ENCODE measurements at regions of chr1 and their contacts with region 1.

Region 1: DNA sequence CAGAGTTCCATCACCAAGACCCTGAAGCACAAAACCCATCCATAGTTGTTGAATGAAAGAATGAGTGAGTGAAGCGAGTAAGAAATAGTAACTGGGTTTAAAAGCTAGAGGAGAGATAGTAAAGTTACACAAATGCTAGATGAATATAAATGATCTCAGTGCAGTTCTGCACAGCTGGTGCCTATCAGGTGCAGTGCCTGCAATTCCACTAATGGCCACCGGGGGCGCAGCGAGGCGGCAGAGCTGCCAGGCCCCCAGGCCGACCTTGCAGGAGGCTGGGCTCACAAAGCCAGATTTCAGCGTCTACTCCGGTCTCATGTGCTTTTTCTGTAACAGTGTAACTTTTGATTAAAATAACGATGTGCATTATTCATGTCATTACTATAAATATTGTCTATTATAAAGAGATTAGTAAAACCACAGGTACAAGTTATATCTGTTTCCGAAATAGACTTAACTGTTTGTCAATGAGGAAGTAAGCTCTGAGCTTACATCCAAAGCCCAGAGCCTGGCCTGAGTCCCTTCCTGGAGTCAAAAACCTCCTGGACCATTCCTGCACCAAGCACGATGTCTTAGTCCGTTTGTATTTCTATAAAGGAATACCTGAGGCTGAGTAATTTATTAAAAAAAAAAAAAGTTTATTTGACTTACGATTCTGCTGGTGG is 477.6 kb downstream of the NPHP4 start:
- DNase-seq: peak; percentile 78
- H3K4me3 ChIP-seq: no peak overlapping the region
- H3K27ac ChIP-seq: no peak overlapping the region
- H3K4me1 ChIP-seq: no peaks in the 10 kb centered on the region
- H3K27me3 ChIP-seq: no peaks in the 10 kb centered on the region
- CTCF ChIP-seq: peak; percentile 100

Region 2: GRCh38 chr1:5707566-5708340 is 193.1 kb after region 1 on chr1:
- intact Hi-C with region 1: no loop called
- DNase-seq: no peak
- H3K4me3 ChIP-seq: no peak overlapping the region
- H3K27ac ChIP-seq: no peak overlapping the region
- H3K4me1 ChIP-seq: no peaks in the 10 kb centered on the region
- H3K27me3 ChIP-seq: no peaks in the 10 kb centered on the region
- CTCF ChIP-seq: no peak

Region 3: DNA sequence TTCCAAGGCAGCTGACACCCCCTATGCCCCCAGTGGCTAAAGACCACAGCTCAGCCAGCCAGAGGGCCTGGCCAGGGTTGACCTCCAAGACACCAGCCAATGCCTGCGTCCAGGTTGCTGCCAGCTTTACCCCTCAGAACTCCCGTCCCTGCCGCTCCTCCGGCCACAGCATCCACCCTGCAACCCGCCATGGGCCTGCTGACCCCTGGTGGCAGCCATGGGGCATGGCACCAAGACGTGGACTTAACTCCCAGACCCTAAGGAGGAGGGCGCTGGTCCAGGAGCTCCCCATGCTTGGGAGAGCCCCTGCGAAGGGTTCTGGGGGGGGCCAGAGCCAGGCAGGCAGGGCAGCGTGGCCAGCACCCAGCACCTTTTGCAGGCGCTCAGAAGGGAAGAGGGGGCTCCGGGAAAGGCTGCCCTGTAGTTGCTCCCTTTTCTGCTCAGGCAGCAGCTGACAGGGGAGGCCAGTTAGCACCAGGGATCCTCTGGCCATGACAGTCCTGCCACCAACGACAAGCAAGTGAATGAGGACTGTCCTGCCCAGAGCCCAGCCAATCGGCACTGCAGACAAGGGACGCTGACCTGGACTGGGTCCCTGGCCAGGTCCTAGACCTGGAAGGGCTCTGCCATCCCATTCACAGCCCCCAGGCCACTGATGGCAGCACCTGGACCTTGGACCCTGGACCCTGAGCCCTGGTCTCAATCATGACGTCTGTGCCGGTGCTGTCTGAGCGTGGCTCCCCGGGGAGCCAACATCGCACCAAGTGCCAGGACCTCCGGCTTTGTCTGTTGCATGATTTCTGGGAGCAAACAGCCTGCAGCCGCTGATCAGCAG is 231.3 kb after region 1 on chr1:
- intact Hi-C with region 1: loop called (anchors 5 kb)
- DNase-seq: peak; percentile 47
- H3K4me3 ChIP-seq: no peak overlapping the region
- H3K27ac ChIP-seq: no peak overlapping the region
- H3K4me1 ChIP-seq: no peaks in the 10 kb centered on the region
- H3K27me3 ChIP-seq: no peaks in the 10 kb centered on the region
- CTCF ChIP-seq: peak; percentile 94

Region 4: GRCh38 chr1:5915587-5916571 is 401.2 kb after region 1 on chr1:
- intact Hi-C with region 1: loop called (anchors 10 kb)
- DNase-seq: no peak
- H3K4me3 ChIP-seq: no peak overlapping the region
- H3K27ac ChIP-seq: no peak overlapping the region
- H3K4me1 ChIP-seq: no peaks in the 10 kb centered on the region
- H3K27me3 ChIP-seq: no peaks in the 10 kb centered on the region
- CTCF ChIP-seq: peak; percentile 64

Region 5: GRCh38 chr1:5973771-5974170 is 459.1 kb after region 1 on chr1:
- intact Hi-C with region 1: loop called (anchors 5 kb)
- DNase-seq: no peak
- H3K4me3 ChIP-seq: no peak overlapping the region
- H3K27ac ChIP-seq: no peak overlapping the region
- H3K4me1 ChIP-seq: no peaks in the 10 kb centered on the region
- H3K27me3 ChIP-seq: no peaks in the 10 kb centered on the region
- CTCF ChIP-seq: no peak